Vagina (tissue), 2 donors: ENCODE measurements at regions of chr10 and their contacts with region 1.

Region 1: GRCh38 chr10:19119191-19119590 is 70.6 kb downstream of the MALRD1 start:
- DNase-seq: no peak
- H3K4me3 ChIP-seq: no peak overlapping the region
- H3K27ac ChIP-seq: no peak overlapping the region
- H3K4me1 ChIP-seq: no peaks in the 10 kb centered on the region
- H3K27me3 ChIP-seq: no peaks in the 10 kb centered on the region
- CTCF ChIP-seq: no peak
- POLR2A ChIP-seq: no peak

Region 2: GRCh38 chr10:18681971-18682411 is 437.2 kb before region 1 on chr10:
- intact Hi-C with region 1: no loop called
- DNase-seq: no peak
- H3K4me3 ChIP-seq: no peak overlapping the region
- H3K27ac ChIP-seq: no peak overlapping the region
- H3K4me1 ChIP-seq: no peaks in the 10 kb centered on the region
- H3K27me3 ChIP-seq: no peaks in the 10 kb centered on the region
- CTCF ChIP-seq: no peak
- POLR2A ChIP-seq: no peak

Region 3: GRCh38 chr10:19142967-19143366 is 23.8 kb after region 1 on chr10:
- intact Hi-C with region 1: loop called (anchors 1 kb)
- DNase-seq: no peak
- H3K4me3 ChIP-seq: no peak overlapping the region
- H3K27ac ChIP-seq: no peak overlapping the region
- H3K4me1 ChIP-seq: no peaks in the 10 kb centered on the region
- H3K27me3 ChIP-seq: no peaks in the 10 kb centered on the region
- CTCF ChIP-seq: no peak
- POLR2A ChIP-seq: no peak